Posterior cingulate gyrus (tissue), 11 donors: ENCODE measurements at regions of chr3 and their contacts with region 1.

Region 1: DNA sequence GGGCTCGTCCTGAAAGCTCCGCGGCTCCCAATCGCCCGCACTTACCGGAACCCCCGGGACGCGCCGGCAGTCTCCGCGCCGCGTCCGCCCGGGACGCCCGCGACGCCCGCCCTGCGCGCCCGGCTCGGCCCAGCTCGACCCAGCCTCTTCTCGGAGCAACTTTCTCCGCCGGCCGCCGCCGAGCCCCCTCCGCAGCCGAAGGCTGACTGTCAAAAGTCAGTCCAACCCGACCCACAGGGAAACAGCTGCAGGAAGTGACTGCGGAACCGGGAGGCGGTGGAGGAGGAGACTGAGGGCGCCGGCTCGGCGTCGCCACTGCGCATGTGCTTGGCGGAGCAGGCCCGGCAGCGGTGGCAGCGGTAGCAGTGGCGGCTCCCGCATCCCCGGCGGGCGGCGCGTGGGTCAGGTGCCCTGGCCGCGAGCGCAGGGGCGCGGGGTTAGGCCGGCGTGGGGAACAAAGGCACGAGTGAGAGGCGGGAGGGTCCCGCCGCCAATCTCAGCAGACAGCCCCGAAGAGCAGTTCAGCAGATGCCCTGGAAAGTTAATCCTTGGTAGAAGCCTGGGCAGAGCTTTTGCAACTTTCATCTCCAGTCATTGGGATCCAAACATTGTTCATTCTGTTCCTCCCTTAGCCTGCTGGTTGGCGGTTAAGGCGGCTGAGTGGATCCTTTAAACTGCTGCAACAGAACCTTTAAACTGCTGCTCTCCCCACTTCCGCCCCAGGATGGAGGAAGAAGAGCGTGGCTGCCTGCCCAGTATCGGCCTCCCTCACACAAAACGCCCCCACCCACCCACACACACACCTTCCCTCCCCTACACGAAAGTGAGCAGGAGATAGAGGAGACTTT is at the start of gene ZMAT3:
- DNase-seq: peak; percentile 83 to 98 (median 88)

Region 2: DNA sequence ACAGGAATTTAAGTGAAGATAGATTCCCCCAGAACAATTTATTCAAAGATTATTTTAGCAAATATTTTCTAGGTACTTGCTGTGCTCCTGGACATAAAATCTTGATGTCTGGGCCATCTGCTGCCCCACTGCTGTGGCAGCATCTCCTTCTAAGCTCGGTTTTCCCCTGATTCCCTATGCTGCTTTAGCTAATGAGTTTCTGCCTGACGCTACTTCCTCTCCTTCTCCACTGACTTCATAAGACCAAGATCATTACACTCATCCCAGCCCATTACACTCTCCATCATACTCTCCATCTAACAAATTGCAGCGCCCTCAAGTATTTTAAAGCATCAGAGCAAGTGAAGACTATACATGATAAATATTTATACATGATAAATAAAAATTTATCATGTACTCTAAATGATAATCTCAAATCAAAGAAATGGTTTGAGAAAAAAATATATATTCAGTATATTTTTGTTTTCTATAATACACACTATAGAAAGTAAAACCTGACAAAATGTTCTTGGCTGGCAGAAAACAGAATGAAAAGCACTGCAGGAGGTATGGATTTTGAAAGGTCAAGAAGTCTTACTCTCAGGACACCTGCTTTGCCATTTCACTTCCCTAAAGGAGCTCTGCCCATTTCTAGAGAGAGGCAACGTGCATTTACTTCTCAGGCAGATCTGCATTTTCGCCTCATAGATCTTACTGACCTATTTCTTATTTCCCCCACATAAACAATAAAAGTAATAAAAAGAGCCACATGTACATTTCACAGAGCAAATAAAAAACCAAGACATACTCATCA is 303.5 kb before region 1 on chr3:
- intact Hi-C with region 1: no loop called
- DNase-seq: no peak

Region 3: DNA sequence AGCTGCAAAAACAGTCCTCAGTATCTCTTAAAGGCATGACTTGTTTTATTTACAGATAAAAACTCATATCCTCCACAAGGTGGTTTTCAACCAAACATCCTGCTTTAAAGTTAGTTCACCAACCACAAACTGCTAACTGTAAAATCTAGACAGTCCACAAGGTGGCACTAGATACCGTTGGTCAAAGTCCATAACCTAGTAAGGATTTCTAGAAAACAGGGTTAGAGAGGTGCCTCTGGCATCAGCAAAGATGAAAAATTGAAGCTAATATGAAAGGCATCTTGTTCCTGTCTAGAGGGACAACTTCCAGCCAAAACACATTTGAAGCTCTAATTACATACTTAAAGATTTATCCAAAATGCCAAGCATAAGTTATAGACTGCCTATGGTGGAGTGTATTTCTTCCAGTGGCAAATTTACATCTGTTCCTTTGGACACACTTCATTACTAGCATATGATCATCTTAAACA is 56.2 kb before region 1 on chr3:
- intact Hi-C with region 1: loop called (anchors 2 kb)
- DNase-seq: peak in 1 of 10 donors; percentile 38

Region 4: GRCh38 chr3:179933080-179933479 is 861.3 kb after region 1 on chr3:
- intact Hi-C with region 1: no loop called
- DNase-seq: no peak